CD4-positive, alpha-beta T cell (primary cell): ENCODE measurements at regions of chr22 and their contacts with region 1.

Region 1: DNA sequence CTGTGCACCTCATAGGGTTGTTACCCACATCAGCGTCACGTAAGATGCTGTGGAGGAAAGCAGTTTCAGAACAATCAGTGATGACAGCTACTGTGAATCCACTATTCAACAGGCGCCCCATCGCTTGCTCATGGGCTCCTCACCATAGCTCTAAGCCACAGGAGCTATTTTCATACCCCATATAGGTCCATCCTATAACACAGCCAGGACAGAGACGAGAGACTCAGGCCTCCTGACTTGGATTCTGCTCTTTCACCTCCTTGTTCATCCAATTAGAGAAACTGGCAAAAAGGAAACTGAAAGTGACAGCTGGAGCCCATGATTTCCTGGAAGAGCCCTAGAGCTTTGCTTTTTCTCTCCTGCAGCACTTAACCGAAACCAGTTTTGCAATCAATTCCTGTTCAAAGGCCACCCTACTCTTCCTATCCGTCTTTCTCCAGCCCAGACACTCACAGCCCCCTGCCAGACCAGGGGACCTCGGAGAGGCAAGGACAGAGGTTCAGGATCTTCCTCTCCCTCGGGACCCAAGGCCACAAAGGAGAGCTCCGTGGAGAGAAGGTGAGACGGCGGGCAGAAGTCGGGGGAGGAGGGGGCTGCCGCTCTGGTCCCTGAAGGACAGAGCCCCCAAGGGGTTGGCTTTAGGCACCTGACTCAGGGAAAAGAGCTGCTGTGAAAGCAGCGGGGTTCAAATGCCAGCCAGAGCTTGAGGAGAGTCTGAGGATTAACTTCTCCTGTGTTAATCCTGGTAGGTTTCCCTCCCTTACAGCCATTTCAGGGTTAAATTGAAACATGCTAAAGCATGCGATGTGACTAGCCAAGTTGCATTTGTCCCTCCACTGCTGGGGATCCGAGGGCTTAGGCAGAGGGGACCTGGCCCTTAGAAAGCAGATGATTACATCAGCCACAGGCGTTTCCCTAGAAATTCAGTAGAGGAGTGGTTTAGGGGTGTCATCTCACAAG is at the start of gene APOL6:
- DNase-seq: peak; percentile 24 to 92 (median 54)
- ATAC-seq: peak; percentile 79
- H3K4me3 ChIP-seq: peak within 1 kb of the TSS; percentile 76
- H3K4me3 Mint-ChIP-seq: peak within 1 kb of the TSS; percentile 100
- H3K27ac ChIP-seq: peak within 1 kb of the TSS; percentile 82 to 98
- H3K27ac Mint-ChIP-seq: peak within 1 kb of the TSS; percentile 98
- H3K4me1 ChIP-seq: peaks cover 35% of the 10 kb centered on the region
- H3K4me1 Mint-ChIP-seq: peaks cover 47% of the 10 kb centered on the region
- H3K27me3 ChIP-seq: no peaks in the 10 kb centered on the region
- H3K27me3 Mint-ChIP-seq: no peaks in the 10 kb centered on the region
- CTCF ChIP-seq: no peak
- total RNA-seq, gene APOL6: 39.3 TPM

Region 2: GRCh38 chr22:35530700-35531099 is 117.6 kb before region 1 on chr22:
- CTCF ChIA-PET with region 1: no interaction called
- POLR2A ChIA-PET with region 1: no interaction called
- intact Hi-C with region 1: no loop called
- DNase-seq: no peak
- ATAC-seq: no peak
- H3K4me3 ChIP-seq: no peak overlapping the region
- H3K4me3 Mint-ChIP-seq: no peak overlapping the region
- H3K27ac ChIP-seq: no peak overlapping the region
- H3K27ac Mint-ChIP-seq: no peak overlapping the region
- H3K4me1 ChIP-seq: no peaks in the 10 kb centered on the region
- H3K4me1 Mint-ChIP-seq: no peaks in the 10 kb centered on the region
- H3K27me3 ChIP-seq: no peaks in the 10 kb centered on the region
- H3K27me3 Mint-ChIP-seq: no peaks in the 10 kb centered on the region
- CTCF ChIP-seq: no peak

Region 3: DNA sequence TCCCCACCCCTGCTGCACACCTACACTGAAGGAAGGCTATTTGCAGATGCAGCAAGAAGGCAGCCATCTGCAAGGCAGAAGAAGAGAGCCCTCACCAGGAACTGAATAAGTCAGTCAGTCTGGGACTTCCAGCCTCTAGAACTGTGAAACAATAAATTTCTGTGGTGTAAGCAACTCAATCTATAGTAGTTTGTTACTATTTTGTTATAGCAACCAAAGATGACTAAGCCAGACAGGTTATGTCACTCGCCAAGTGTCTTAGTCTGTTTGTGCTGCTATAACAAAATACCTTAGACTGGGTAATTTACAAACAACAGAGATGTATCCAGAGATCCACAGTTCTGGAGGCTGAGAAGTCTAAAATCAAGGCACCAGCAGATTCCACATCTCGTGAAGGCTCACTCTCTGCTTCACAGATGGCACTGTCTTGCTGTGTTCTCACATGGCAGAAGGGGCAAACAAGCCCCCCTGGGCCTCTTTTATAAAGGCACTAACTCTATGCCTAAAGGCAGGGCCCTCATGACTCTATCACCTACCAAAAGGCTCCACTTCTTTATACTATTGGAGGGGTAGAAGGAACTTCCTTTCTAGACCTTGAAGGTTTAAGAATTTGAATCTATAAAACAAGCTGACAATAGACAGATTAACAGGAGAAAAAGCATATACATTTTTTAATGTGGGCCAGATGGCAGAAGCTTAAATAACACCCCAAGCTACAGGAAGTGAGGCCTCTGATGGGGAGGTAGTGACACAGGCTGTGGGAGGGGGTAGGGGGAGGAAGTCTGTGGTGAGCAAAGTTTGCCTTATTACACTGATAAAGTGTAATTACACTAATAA is 12.2 kb after region 1 on chr22:
- CTCF ChIA-PET with region 1: interaction called, 4 read pairs
- POLR2A ChIA-PET with region 1: interaction called, 72 read pairs
- intact Hi-C with region 1: loop called in 1 of 2 experiments (anchors 1 kb)
- DNase-seq: peak; percentile 47 to 91 (median 62)
- ATAC-seq: peak; percentile 89
- H3K4me3 ChIP-seq: peak overlapping the region; percentile 0
- H3K4me3 Mint-ChIP-seq: peak overlapping the region; percentile 30
- H3K27ac ChIP-seq: peak overlapping the region; percentile 92 to 93
- H3K27ac Mint-ChIP-seq: peak overlapping the region; percentile 98
- H3K4me1 ChIP-seq: peaks cover 57% of the 10 kb centered on the region
- H3K4me1 Mint-ChIP-seq: peaks cover 76% of the 10 kb centered on the region
- H3K27me3 ChIP-seq: no peaks in the 10 kb centered on the region
- H3K27me3 Mint-ChIP-seq: no peaks in the 10 kb centered on the region
- CTCF ChIP-seq: no peak

Region 4: GRCh38 chr22:35697142-35697541 is 48.8 kb after region 1 on chr22:
- CTCF ChIA-PET with region 1: no interaction called
- POLR2A ChIA-PET with region 1: interaction called, 4 read pairs
- intact Hi-C with region 1: loop called in 1 of 2 experiments (anchors 5 kb)
- DNase-seq: peak in 1 of 14 experiments; percentile 17
- ATAC-seq: peak; percentile 35
- H3K4me3 ChIP-seq: no peak overlapping the region
- H3K4me3 Mint-ChIP-seq: no peak overlapping the region
- H3K27ac ChIP-seq: no peak overlapping the region
- H3K27ac Mint-ChIP-seq: no peak overlapping the region
- H3K4me1 ChIP-seq: no peaks in the 10 kb centered on the region
- H3K4me1 Mint-ChIP-seq: no peaks in the 10 kb centered on the region
- H3K27me3 ChIP-seq: no peaks in the 10 kb centered on the region
- H3K27me3 Mint-ChIP-seq: peaks cover 12% of the 10 kb centered on the region
- CTCF ChIP-seq: no peak